AG04450 (cell line): ENCODE measurements at regions of chr3 and their contacts with region 1.

Region 1: DNA sequence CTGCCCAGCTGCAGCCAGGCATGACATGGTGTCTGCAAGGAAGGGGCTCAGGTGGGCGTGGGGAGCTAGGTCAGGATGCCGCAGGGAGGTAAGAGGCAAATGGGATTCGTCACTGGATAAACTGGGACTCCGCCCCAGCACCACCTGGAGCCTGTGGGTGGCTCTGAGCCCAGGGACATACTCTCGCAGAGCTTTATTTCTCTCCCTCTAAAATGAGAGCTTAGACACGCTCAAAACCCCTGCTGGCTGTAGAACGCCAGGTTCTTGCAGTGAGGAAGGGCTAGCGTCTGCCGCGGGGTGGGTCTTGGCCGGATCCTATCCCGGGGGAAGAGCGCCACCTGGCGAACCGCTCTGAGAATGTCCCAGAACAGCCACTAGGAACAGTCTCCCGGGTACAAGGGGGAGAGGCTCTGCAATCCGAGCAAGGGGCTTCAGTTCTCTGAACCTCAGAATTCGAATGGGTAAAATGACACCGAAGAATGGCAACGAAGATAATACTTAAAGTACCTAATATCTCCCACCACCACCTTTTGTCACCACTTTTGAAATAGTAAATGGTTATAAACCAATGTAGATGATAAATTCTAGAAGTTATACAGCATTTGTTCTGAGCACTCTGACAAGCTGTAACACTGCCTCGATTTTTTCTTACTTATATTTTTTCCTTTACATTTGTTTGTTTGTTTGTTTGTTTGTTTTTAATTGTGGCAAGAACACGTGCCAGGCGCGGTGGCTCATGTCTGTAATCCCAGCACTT is 53.2 kb upstream of the SRGAP3 start:
- DNase-seq: peak; percentile 54
- H3K4me3 ChIP-seq: peak overlapping the region; percentile 27
- H3K27ac ChIP-seq: no peak overlapping the region
- H3K27me3 ChIP-seq: peaks cover 5% of the 10 kb centered on the region
- CTCF ChIP-seq: peak; percentile 91

Region 2: GRCh38 chr3:8970971-8971589 is 331.5 kb before region 1 on chr3:
- CTCF ChIA-PET with region 1: interaction called, 154 read pairs
- POLR2A ChIA-PET with region 1: no interaction called
- DNase-seq: peak; percentile 37
- H3K4me3 ChIP-seq: no peak overlapping the region
- H3K27ac ChIP-seq: no peak overlapping the region
- H3K27me3 ChIP-seq: no peaks in the 10 kb centered on the region
- CTCF ChIP-seq: peak; percentile 99

Region 3: DNA sequence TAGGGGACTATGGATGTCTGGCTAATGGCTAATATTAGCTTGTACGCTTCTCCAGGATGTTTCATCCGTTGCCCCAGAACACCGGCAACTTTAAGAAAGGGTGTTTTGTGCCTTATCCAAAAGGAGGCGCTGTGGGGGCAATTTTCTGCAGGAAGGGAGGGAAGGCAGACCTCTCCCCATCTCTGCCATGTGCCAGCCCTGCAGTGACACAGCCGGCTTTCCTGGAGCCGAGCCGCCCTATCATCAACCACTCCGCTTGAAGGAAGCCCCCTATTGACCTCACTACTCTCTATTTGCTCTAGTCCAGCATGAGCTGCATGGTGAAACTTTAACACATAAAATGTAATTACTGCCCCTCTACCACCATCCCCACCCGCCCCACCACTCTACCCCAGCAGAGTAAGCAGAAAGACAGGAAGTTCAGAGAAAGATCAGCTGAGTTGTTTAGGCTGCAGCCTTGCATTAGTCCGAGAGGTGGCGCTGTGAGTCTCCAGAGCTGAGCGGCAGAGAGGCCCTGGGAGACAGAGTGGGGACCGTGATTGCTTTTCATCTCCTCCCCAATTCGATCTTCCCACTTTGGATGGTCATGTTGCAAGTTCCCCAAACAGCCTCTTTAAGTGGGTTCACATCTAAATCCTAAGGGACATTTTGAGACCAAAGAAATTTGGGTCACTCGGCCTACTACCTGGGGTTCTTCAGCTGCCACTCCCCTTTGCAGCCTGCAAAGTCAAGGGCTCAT is 314.8 kb before region 1 on chr3:
- CTCF ChIA-PET with region 1: interaction called, 41 read pairs
- POLR2A ChIA-PET with region 1: no interaction called
- DNase-seq: no peak
- H3K4me3 ChIP-seq: no peak overlapping the region
- H3K27ac ChIP-seq: no peak overlapping the region
- H3K27me3 ChIP-seq: peaks cover 14% of the 10 kb centered on the region
- CTCF ChIP-seq: peak; percentile 75

Region 4: GRCh38 chr3:9249273-9250192 is 53.1 kb before region 1 on chr3 and contains the start of gene SRGAP3:
- CTCF ChIA-PET with region 1: interaction called, 16 read pairs
- POLR2A ChIA-PET with region 1: no interaction called
- DNase-seq: peak; percentile 54
- H3K4me3 ChIP-seq: peak within 1 kb of the TSS; percentile 66
- H3K27ac ChIP-seq: no peak within 1 kb of the TSS
- H3K27me3 ChIP-seq: peaks cover 30% of the 10 kb centered on the region
- CTCF ChIP-seq: peak; percentile 41
- polyA plus RNA-seq, gene SRGAP3: 0.61 and 0.92 TPM in 2 replicates

Region 5: DNA sequence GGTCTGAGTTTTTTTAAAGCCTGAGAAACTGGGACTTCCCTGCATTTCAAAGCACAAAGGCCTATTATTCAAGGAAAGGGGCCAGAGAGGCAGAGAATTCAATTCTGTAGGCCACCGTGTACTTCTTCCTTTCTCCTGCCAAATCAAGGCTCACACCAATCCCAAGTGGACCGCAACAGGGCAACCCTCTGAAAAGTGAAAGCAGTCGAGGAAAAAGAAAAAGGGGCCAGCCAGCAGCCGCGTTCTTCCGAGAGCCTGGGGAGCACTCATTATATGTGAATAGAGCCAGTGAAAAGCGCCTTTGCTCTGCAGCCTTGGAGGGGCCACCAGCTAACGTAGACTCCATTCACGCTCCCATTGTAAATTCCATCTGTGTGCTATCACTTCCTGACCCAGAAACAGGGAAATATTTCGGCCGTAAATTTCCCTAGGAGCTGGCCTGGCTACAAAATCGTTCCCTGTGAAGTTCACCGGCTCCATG is 14.3 kb after region 1 on chr3:
- CTCF ChIA-PET with region 1: interaction called, 43 read pairs
- POLR2A ChIA-PET with region 1: no interaction called
- DNase-seq: no peak
- H3K4me3 ChIP-seq: peak overlapping the region; percentile 7
- H3K27ac ChIP-seq: peak overlapping the region; percentile 82
- H3K27me3 ChIP-seq: no peaks in the 10 kb centered on the region
- CTCF ChIP-seq: no peak

Region 6: GRCh38 chr3:9473496-9474065 is 171.0 kb after region 1 on chr3:
- CTCF ChIA-PET with region 1: no interaction called
- POLR2A ChIA-PET with region 1: no interaction called
- DNase-seq: no peak
- H3K4me3 ChIP-seq: no peak overlapping the region
- H3K27ac ChIP-seq: no peak overlapping the region
- H3K27me3 ChIP-seq: no peaks in the 10 kb centered on the region
- CTCF ChIP-seq: no peak

Region 7: DNA sequence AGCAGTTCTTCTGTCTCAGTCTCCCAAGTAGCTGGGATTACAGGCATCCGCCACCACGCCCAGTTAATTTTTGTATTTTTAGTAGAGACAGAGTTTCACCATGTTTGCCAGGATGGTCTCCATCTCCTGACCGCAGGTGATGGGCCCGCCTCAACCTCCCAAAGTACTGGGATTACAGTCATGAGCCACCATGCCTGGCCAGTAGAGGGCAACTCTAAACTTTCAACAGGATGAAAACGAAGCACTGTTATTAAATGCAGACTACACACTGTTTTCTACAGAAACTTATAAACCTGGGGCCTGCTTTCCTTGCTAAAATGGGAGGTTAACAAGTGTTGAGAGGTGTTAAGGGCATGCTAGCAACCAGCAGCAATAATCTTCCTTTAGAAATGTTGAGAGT is 497.9 kb after region 1 on chr3:
- CTCF ChIA-PET with region 1: no interaction called
- POLR2A ChIA-PET with region 1: no interaction called
- DNase-seq: no peak
- H3K4me3 ChIP-seq: no peak overlapping the region
- H3K27ac ChIP-seq: no peak overlapping the region
- H3K27me3 ChIP-seq: no peaks in the 10 kb centered on the region
- CTCF ChIP-seq: peak; percentile 44